ENCODE measurements at regions of chr11 and their contacts with region 1.

Region 1: GRCh38 chr11:119942583-119943297 is 195.2 kb downstream of the TRIM29 start:
- DNase-seq: no peak
- ATAC-seq: no peak
- H3K4me3 ChIP-seq: no peak overlapping the region
- H3K4me3 Mint-ChIP-seq: no peak overlapping the region
- H3K27ac ChIP-seq: no peak overlapping the region
- H3K27ac Mint-ChIP-seq: no peak overlapping the region
- H3K4me1 ChIP-seq: no peaks in the 10 kb centered on the region
- H3K4me1 Mint-ChIP-seq: no peaks in the 10 kb centered on the region
- H3K27me3 ChIP-seq: peaks cover 2 to 34% of the 10 kb centered on the region in 2 experiments
- H3K27me3 Mint-ChIP-seq: peaks cover 12 to 22% of the 10 kb centered on the region in 2 donors

Region 2: GRCh38 chr11:119744577-119744976 is 198.2 kb before region 1 on chr11:
- CTCF ChIA-PET with region 1: no interaction called
- POLR2A ChIA-PET with region 1: interaction called in 1 of 2 experiments, 10 read pairs
- DNase-seq: no peak
- ATAC-seq: no peak
- H3K4me3 ChIP-seq: no peak overlapping the region
- H3K4me3 Mint-ChIP-seq: no peak overlapping the region
- H3K27ac ChIP-seq: no peak overlapping the region
- H3K27ac Mint-ChIP-seq: peak overlapping the region in 1 of 2 donors; percentile 10
- H3K4me1 ChIP-seq: peaks cover 0 to 19% of the 10 kb centered on the region in 2 experiments
- H3K4me1 Mint-ChIP-seq: peaks cover 6 to 16% (median 15%) of the 10 kb centered on the region in 3 donors
- H3K27me3 ChIP-seq: peaks cover 9 to 78% of the 10 kb centered on the region in 2 experiments
- H3K27me3 Mint-ChIP-seq: peaks cover 31 to 54% of the 10 kb centered on the region in 2 donors